Posterior vena cava (tissue), 2 donors: ENCODE measurements at regions of chr12 and their contacts with region 1.

Region 1: GRCh38 chr12:119412811-119413794 is 78.6 kb downstream of the CCDC60 start:
- DNase-seq: peak; percentile 80

Region 2: DNA sequence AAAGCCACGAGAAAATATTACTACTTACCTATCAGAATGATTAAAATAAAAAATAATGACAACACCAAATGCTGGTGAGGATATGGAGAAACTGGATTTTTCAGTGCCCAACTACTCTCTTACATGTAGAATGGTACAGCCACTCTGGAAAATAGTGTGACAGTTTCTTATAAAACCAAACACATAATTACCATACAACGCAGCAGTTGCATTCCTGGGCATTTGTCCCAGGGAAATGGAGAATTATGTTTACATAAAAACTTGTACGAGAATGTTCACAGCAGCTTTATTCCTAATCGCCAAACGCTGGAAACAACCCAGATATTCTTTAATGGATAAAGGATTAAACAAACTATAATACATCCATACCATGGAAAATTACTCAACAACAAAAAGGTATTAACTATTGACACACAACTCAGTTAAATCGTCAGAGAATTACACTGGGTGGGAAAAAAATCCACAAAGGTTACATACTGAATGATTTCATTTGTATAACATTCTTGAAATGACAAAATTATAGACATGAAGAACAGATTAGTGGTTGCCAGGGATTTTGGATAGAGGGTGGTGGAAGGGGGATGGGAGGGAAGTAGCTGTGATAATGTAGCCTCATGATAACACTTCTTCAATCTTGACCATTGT is 1075.8 kb before region 1 on chr12:
- intact Hi-C with region 1: no loop called
- DNase-seq: no peak

Region 3: DNA sequence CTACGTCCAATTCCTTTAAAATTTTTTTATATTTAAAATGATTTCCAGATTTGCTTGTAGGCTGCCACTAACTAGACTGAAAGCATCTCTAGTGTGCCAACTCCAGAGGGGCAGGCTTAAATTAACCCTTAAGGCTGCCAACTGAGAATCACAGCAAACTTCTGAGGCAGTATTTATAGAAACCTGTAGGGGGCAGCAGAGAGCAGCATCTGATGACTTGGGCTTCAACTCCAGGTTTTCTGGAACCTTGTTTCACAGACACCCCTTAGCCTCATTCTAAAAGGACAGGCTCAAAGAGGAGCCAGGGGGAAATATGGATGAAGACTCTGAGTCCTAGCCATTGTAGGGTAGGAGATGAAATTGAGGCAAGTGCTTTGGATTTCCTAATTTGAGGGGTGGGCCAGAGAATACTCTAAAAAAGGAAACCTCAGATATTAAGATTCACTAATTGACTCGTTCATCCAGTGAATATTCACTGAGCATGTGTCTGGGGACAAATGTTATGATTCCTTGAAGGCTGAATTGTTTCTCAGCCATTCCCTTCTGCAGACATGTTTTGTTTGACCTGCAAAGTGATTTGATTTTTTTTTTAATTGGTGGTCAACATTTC is 297.7 kb before region 1 on chr12:
- intact Hi-C with region 1: loop called (anchors 1 to 2 kb)
- DNase-seq: no peak

Region 4: GRCh38 chr12:119500209-119500608 is 87.1 kb after region 1 on chr12:
- intact Hi-C with region 1: no loop called
- DNase-seq: no peak